Cardiac septum (tissue), 1 donor: ENCODE measurements at regions of chr14 and their contacts with region 1.

Region 1: GRCh38 chr14:99604283-99604765 is 317 bp upstream of the CCDC85C start:
- DNase-seq: peak; percentile 94

Region 2: GRCh38 chr14:99563233-99564129 is 40.8 kb before region 1 on chr14:
- intact Hi-C with region 1: loop called (anchors 5 kb)
- DNase-seq: peak; percentile 87

Region 3: GRCh38 chr14:99575043-99576023 is 29.0 kb before region 1 on chr14:
- intact Hi-C with region 1: loop called (anchors 2 kb)
- DNase-seq: peak; percentile 87

Region 4: GRCh38 chr14:99672506-99673304 is 68.4 kb after region 1 on chr14:
- intact Hi-C with region 1: no loop called
- DNase-seq: no peak